Activated T-helper 1 cell treated with anti-CD3 and anti-CD28 coated beads, Interleukin-12 subunit alpha, Interleukin-12 subunit beta, Interleukin-2, Interleukin-4 antibody, amounts not matched to agents 30 ng/mL and 10 ng/mL and 1 ng/mL, durations not matched to agents 14 hours and 24 hours and 36 hours (primary cell): ENCODE measurements at regions of chr9 and their contacts with region 1.

Region 1: GRCh38 chr9:68912561-68912960 is 101.4 kb downstream of the PRKACG start:
- DNase-seq: no peak
- H3K4me3 Mint-ChIP-seq: no peak overlapping the region
- H3K27ac Mint-ChIP-seq: no peak overlapping the region
- H3K4me1 Mint-ChIP-seq: peaks cover 32% of the 10 kb centered on the region
- H3K27me3 Mint-ChIP-seq: peaks cover 3% of the 10 kb centered on the region

Region 2: DNA sequence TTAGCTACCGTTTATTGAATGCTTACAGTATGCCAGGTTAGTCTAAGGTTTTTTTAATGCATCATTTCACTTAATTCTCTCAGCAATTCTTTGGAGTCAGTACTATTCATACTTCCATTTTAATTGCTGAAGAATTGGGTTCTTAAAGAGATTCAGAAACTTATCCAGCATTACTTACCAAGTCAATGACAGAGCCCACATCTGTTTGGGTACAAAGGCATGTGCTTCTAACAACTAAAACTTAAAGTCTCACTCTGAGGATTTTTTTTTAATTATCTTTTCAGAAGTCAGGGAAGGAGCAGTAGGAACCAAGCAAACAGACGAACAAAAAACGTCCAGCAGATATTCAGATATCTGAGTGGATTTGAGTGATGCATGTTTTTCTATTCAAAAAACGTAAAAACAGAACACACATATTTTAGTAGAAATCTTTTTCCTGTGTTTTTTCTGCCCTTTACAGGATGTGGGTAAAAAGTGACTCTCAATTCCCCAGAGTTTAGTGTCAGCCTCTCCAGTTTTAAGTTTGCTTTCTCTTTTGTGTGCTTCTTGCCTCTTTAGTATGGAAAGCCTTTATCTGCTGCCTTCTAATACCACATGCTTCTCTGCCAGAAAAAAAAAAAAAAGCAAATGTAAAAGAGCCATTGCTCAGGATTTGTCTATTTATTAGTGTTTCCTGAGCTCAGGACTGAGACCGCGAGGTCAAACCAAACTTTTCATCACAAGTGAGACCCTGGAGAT is 16.7 kb before region 1 on chr9:
- intact Hi-C with region 1: loop called (anchors 2 kb)
- DNase-seq: no peak
- H3K4me3 Mint-ChIP-seq: peak overlapping the region; percentile 70
- H3K27ac Mint-ChIP-seq: peak overlapping the region; percentile 84
- H3K4me1 Mint-ChIP-seq: peaks cover 51% of the 10 kb centered on the region
- H3K27me3 Mint-ChIP-seq: no peaks in the 10 kb centered on the region